WTC11 (cell line): ENCODE measurements at regions of chr13 and their contacts with region 1.

Region 1: DNA sequence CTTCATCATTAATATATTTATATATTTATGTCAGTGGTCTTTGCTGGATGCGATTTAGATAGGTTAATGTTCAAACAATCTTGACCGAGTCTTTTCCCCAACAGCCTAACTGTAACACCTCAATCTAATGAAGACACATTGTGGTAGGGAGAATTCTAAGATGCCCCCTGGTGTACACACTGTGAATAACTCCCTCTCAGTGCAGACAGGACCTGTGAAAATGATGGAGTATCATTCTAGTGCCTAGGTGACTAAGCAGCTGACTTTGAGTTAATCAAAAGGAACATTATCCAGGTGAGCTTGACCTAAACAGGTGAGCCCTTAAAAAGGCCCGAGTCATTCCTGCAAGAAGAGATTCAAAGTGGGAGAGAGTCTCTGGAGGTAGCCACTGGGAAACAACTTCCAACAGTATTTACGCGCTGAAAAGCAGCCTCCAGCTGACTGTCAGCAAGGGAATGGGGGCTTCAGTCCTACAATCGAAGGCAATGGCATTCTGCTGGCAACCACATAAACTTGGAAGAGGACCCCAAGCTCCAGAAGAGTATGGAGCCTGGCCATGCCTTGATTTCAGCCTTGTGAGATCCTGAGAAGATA is 28.0 kb upstream of the KBTBD7 start:
- DNase-seq: peak; percentile 60
- ATAC-seq: peak; percentile 98
- H3K4me3 Mint-ChIP-seq: no peak overlapping the region
- H3K27ac Mint-ChIP-seq: no peak overlapping the region
- H3K4me1 Mint-ChIP-seq: no peaks in the 10 kb centered on the region
- H3K27me3 Mint-ChIP-seq: no peaks in the 10 kb centered on the region
- CTCF ChIP-seq: peak; percentile 79

Region 2: DNA sequence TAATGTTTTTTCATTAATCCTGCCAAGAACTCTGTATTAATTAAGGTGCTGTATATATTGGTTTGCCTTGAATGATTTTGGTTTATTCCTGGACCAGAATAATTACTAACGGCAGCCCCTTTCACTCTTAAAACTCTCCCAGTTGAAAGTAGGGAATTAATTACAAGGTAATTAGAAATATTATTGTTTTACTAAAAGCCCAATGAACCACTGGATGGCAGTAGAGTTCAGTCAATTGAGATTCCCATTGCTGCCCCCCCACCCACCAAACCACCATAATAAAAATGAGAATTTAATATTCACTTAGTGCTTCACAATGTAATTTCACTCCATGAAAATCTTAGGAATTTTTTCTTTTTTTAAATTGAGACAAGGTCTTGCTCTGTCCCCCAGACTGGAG is 147.3 kb before region 1 on chr13:
- CTCF ChIA-PET with region 1: interaction called, 11 read pairs
- POLR2A ChIA-PET with region 1: no interaction called
- DNase-seq: no peak
- ATAC-seq: no peak
- H3K4me3 Mint-ChIP-seq: no peak overlapping the region
- H3K27ac Mint-ChIP-seq: no peak overlapping the region
- H3K4me1 Mint-ChIP-seq: no peaks in the 10 kb centered on the region
- H3K27me3 Mint-ChIP-seq: no peaks in the 10 kb centered on the region
- CTCF ChIP-seq: no peak; the same call in 1 of the 2 replicates

Region 3: DNA sequence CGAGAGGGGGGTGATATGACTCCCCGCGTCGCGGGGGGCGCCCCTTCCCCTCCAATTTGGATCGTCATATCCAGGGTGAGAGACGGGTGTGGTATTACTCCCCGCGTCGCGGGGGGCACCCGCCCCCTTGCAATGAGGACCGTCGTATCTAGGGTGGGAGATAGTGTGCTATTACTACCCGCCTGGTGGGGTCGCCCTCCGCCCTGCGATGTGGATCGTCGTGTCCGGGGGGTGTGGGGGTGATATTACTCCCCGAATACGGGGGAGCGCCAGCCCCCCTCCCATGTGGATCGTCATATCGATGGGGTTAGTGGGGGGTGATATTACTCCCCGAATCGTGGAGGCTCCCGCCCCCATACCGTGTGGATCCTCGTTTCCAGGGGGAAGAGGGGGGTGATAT is 205.8 kb after region 1 on chr13:
- CTCF ChIA-PET with region 1: no interaction called
- POLR2A ChIA-PET with region 1: no interaction called
- DNase-seq: peak; percentile 60
- ATAC-seq: peak; percentile 89
- H3K4me3 Mint-ChIP-seq: peak overlapping the region; percentile 70
- H3K27ac Mint-ChIP-seq: no peak overlapping the region
- H3K4me1 Mint-ChIP-seq: peaks cover 4% of the 10 kb centered on the region
- H3K27me3 Mint-ChIP-seq: peaks cover 6% of the 10 kb centered on the region
- CTCF ChIP-seq: peak; percentile 30; the same call in 1 of the 2 replicates